HEK293 (cell line): ENCODE measurements at regions of chr22 and their contacts with region 1.

Region 1: GRCh38 chr22:28051787-28052356 is 132.8 kb upstream of the PITPNB start:
- H3K4me3 ChIP-seq: no peak overlapping the region
- H3K27ac ChIP-seq: no peak overlapping the region
- H3K4me1 ChIP-seq: no peaks in the 10 kb centered on the region
- CTCF ChIP-seq: peak; percentile 48; the same call in 1 of the 2 replicates

Region 2: GRCh38 chr22:28019881-28020871 is 31.7 kb before region 1 on chr22:
- CTCF ChIA-PET with region 1: interaction called, 33 read pairs
- POLR2A ChIA-PET with region 1: no interaction called
- H3K4me3 ChIP-seq: no peak overlapping the region
- H3K27ac ChIP-seq: no peak overlapping the region
- H3K4me1 ChIP-seq: no peaks in the 10 kb centered on the region; the same call in 1 of the 2 replicates
- CTCF ChIP-seq: peak; percentile 86

Region 3: GRCh38 chr22:28442264-28442710 is 390.4 kb after region 1 on chr22:
- CTCF ChIA-PET with region 1: interaction called, 33 read pairs
- POLR2A ChIA-PET with region 1: no interaction called
- H3K4me3 ChIP-seq: peak overlapping the region; percentile 29
- H3K27ac ChIP-seq: peak overlapping the region; percentile 73
- H3K4me1 ChIP-seq: peaks cover 38% of the 10 kb centered on the region
- CTCF ChIP-seq: peak; percentile 89

Region 4: GRCh38 chr22:28594797-28595462 is 543.1 kb after region 1 on chr22:
- CTCF ChIA-PET with region 1: interaction called, 72 read pairs
- POLR2A ChIA-PET with region 1: no interaction called
- H3K4me3 ChIP-seq: no peak overlapping the region
- H3K27ac ChIP-seq: no peak overlapping the region
- H3K4me1 ChIP-seq: peaks cover 5% of the 10 kb centered on the region
- CTCF ChIP-seq: peak; percentile 56; the same call in 1 of the 2 replicates

Region 5: GRCh38 chr22:28600546-28601143 is 548.8 kb after region 1 on chr22:
- CTCF ChIA-PET with region 1: interaction called, 72 read pairs
- POLR2A ChIA-PET with region 1: no interaction called
- H3K4me3 ChIP-seq: no peak overlapping the region
- H3K27ac ChIP-seq: no peak overlapping the region
- H3K4me1 ChIP-seq: no peaks in the 10 kb centered on the region
- CTCF ChIP-seq: no peak